ENCODE measurements at regions of chr15 and their contacts with region 1.

Region 1: DNA sequence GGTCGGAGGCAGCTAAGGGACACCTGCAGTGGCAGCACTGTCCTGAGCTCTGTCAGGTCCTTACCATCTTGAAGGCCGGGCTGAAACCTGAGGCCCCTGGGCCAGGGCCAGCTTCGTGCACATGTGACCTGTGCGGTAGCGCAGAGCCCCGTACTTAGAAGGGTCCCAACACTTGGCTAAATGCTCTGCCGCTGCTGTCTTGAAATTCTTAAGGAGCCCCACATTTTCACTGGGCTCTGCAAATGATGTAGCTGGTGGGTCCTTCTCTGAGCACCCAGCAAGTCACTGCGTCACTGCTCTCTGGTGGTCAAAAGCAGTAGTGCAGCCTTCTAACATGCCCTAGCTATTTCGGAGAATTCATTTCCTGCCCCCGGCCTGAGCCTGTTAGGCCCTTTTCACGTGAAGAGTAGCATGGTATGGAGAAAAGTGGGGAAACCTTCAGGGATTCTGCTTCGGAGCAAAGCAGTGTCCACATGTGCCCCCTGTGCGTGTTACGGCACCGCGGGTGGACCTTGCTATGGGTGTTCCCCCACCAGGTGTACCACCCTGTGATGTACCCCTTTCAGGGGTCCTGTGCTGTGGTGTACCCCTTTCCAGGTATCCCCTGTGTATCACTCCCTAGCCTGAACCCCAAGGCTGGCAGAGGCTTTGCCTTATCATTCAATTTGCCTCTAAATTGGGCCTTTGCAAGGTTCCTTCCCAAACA is 79.7 kb downstream of the TMEM266 start:
- DNase-seq: peak; percentile 51
- ATAC-seq: peak; percentile 96
- H3K4me3 ChIP-seq: no peak overlapping the region
- H3K27ac ChIP-seq: no peak overlapping the region
- H3K4me1 ChIP-seq: no peaks in the 10 kb centered on the region
- H3K27me3 ChIP-seq: no peaks in the 10 kb centered on the region; a peak in 1 of 4 replicates
- CTCF ChIP-seq: peak; percentile 92 to 97 (median 94)
- EP300 ChIP-seq: no peak
- POLR2A ChIP-seq: no peak
- RAD21 ChIP-seq: peak; percentile 93

Region 2: GRCh38 chr15:75801859-75802593 is 337.5 kb before region 1 on chr15:
- CTCF ChIA-PET with region 1: interaction called, 12 read pairs
- POLR2A ChIA-PET with region 1: no interaction called
- RAD21 ChIA-PET with region 1: interaction called, 10 read pairs
- SMC1A ChIA-PET with region 1: interaction called, 5 read pairs
- in situ Hi-C with region 1: no loop called
- intact Hi-C with region 1: no loop called
- DNase-seq: no peak
- ATAC-seq: peak; percentile 100
- H3K4me3 ChIP-seq: no peak overlapping the region
- H3K27ac ChIP-seq: no peak overlapping the region
- H3K4me1 ChIP-seq: no peaks in the 10 kb centered on the region
- H3K27me3 ChIP-seq: peaks cover 1 to 2% of the 10 kb centered on the region in 2 experiments; a peak in 2 of 4 replicates
- CTCF ChIP-seq: peak; percentile 66 to 93 (median 80)
- EP300 ChIP-seq: no peak
- POLR2A ChIP-seq: no peak
- RAD21 ChIP-seq: peak; percentile 88

Region 3: DNA sequence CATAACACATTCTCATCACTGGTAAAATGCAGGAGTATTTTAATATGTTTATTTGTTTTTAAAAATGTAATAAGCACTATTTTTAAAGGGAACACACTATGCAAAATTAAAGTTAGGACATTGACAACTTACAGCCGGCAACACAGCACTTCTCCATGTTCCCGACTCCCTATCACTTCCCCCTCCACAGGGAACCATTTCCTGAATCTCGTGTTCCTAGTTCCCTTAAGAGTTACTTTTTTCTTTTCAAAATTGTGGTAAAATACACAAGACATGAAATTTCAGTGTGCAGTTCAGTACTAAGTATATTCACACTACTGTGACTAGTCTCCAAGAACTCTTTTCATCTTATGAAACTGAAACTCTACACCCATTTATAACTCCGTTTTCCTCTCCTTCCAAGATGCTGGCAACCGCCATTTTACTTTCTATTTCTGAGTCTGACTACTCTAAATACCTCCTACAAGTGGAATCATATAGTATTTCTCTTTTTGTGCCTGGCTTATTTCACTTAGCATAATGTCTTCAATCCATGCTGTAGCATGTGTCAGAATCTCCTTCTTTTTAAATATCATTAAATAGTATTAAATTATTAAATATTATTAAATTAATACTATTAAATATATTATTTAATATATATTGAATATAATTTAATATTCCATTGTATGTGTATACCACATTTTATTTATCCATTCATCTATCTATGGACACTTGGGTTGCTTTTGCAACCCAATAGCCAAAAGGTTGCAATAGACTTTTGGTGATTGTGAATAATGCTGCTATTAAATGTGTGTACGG is 322.2 kb before region 1 on chr15:
- CTCF ChIA-PET with region 1: interaction called, 74 read pairs
- POLR2A ChIA-PET with region 1: no interaction called
- RAD21 ChIA-PET with region 1: interaction called, 5 read pairs
- SMC1A ChIA-PET with region 1: interaction called, 44 read pairs
- in situ Hi-C with region 1: loop called (anchors 5 kb)
- intact Hi-C with region 1: no loop called
- DNase-seq: no peak
- ATAC-seq: peak; percentile 36; the same call in 2 of the 3 replicates
- H3K4me3 ChIP-seq: no peak overlapping the region
- H3K27ac ChIP-seq: no peak overlapping the region
- H3K4me1 ChIP-seq: peaks cover 5% of the 10 kb centered on the region; the same call in 1 of the 2 replicates
- H3K27me3 ChIP-seq: no peaks in the 10 kb centered on the region
- CTCF ChIP-seq: no peak
- EP300 ChIP-seq: no peak
- POLR2A ChIP-seq: no peak
- RAD21 ChIP-seq: no peak

Region 4: DNA sequence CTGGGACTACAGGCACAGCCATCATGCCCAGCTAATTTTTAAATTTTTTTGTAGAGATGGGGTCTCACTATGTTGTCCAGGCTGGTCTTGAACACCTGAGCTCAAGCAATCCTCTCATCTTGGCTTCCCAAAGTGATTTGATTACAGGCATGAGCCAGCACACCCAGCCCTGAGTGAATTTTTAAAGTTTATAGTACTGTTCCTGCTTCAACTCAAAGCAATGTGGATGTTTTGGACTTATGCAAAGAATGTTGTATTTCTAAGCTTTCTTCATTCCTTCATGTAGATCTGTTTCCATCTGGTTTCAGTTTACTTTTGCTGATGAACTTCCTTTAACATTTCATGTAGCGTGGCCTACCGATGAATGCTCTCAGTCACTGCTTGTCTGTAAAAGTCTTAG is 150.5 kb before region 1 on chr15:
- CTCF ChIA-PET with region 1: interaction called, 11 read pairs
- POLR2A ChIA-PET with region 1: no interaction called
- RAD21 ChIA-PET with region 1: no interaction called
- SMC1A ChIA-PET with region 1: no interaction called
- in situ Hi-C with region 1: no loop called
- intact Hi-C with region 1: no loop called
- DNase-seq: no peak
- ATAC-seq: no peak
- H3K4me3 ChIP-seq: no peak overlapping the region
- H3K27ac ChIP-seq: no peak overlapping the region
- H3K4me1 ChIP-seq: no peaks in the 10 kb centered on the region
- H3K27me3 ChIP-seq: no peaks in the 10 kb centered on the region
- CTCF ChIP-seq: no peak
- EP300 ChIP-seq: no peak
- POLR2A ChIP-seq: no peak
- RAD21 ChIP-seq: no peak

Region 5: DNA sequence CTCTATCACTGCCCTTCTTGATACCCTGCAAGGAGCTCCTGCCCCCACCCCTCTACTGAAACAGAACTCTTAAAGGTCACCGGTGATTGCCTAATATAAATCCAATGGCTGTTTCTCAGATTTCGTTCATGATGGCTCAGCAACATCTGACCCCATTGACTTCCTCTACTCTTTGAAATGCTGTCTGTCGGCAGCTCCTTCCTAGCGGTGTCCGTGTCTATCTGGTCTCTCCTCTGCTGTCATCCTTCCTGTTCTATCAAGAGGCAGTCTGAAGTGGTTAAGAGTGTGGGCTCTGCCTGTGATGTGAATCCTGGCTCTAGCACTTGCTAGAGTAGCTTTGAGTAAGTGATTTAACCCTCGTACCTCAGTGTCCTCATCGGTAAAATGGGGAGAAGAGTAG is 74.3 kb before region 1 on chr15:
- CTCF ChIA-PET with region 1: interaction called, 347 read pairs
- POLR2A ChIA-PET with region 1: interaction called, 23 read pairs
- RAD21 ChIA-PET with region 1: interaction called, 214 read pairs
- SMC1A ChIA-PET with region 1: interaction called, 217 read pairs
- in situ Hi-C with region 1: no loop called
- intact Hi-C with region 1: no loop called
- DNase-seq: no peak
- ATAC-seq: no peak
- H3K4me3 ChIP-seq: no peak overlapping the region
- H3K27ac ChIP-seq: no peak overlapping the region
- H3K4me1 ChIP-seq: peaks cover 2% of the 10 kb centered on the region; the same call in 1 of the 2 replicates
- H3K27me3 ChIP-seq: no peaks in the 10 kb centered on the region; a peak in 2 of 4 replicates
- CTCF ChIP-seq: no peak
- EP300 ChIP-seq: no peak
- POLR2A ChIP-seq: no peak
- RAD21 ChIP-seq: no peak

Region 6: GRCh38 chr15:76150971-76151598 is 11.6 kb after region 1 on chr15:
- CTCF ChIA-PET with region 1: interaction called, 99 read pairs
- POLR2A ChIA-PET with region 1: no interaction called
- RAD21 ChIA-PET with region 1: interaction called, 20 read pairs
- SMC1A ChIA-PET with region 1: interaction called, 23 read pairs
- in situ Hi-C with region 1: no loop called
- intact Hi-C with region 1: no loop called
- DNase-seq: peak; percentile 77
- ATAC-seq: peak; percentile 98
- H3K4me3 ChIP-seq: 0 out of 2 replicates have a peak overlapping the region, but pooled peaks have one; percentile 7
- H3K27ac ChIP-seq: no peak overlapping the region
- H3K4me1 ChIP-seq: peaks cover 20% of the 10 kb centered on the region
- H3K27me3 ChIP-seq: 0 out of 4 replicates have a peak, but pooled peaks cover 0 to 2% of the 10 kb centered on the region in 2 experiments
- CTCF ChIP-seq: peak; percentile 86 to 90 (median 90); a peak in 5 of 6 replicates
- EP300 ChIP-seq: peak in 1 of 2 experiments; percentile 18; a peak in 1 of 4 replicates
- POLR2A ChIP-seq: no peak
- RAD21 ChIP-seq: peak; percentile 66

Measured in GM12878 (cell line).